ENCODE measurements at regions of chr9 and their contacts with region 1.

Region 1: DNA sequence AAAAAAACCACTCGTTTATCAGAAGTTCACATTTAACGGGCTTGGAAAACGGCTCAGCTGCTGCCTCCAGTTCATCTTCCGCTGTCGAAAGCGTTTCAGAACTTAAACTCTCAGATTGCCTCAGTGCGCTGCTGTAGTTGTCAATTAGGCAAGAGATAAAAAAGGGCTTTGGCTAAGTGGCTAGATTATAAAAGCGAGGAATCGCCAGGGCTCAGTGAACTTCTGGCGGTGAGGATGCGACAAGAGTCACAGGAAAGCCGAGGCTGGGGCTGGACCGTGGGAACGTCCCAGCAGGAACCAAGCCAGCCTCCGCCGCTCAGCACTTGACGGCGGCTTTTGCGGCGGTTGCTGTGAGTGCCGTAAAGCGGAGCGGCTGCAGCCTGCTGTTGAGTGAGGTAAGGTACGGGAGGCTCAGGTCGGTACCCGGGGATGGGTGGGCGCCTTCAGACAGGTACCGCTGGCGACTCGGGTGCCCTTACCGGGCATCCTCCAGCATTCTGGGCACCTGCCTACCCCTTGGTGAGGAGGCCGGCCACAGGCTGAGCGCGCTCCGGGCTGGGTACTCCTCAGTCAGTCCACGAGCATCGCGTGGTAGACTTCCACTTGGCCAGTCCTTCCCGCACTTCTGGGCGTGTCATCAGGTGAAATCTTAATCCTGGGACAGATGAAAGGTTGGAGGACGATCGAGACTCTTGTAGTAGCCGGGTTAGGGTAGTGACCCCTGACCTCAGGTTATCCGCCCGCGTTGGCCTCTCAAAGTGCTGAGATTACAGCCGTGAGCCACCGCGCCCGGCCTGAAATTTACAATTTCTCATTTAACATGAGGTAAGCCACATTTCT is at the start of gene FKTN:
- DNase-seq: peak; percentile 73
- ATAC-seq: peak; percentile 95
- H3K4me3 ChIP-seq: peak within 1 kb of the TSS; percentile 76 to 93 (median 90)
- H3K27ac ChIP-seq: peak within 1 kb of the TSS; percentile 35
- H3K4me1 ChIP-seq: peaks cover 12% of the 10 kb centered on the region
- H3K27me3 ChIP-seq: no peaks in the 10 kb centered on the region; a peak in 1 of 5 replicates
- CTCF ChIP-seq: no peak
- EP300 ChIP-seq: no peak
- POLR2A ChIP-seq: peak in 1 of 2 experiments; percentile 84; a peak in 2 of 4 replicates
- RAD21 ChIP-seq: peak; percentile 9; the same call in 1 of the 2 replicates
- total RNA-seq, gene FKTN: 13.5 and 15.2 TPM in 2 replicates

Region 2: DNA sequence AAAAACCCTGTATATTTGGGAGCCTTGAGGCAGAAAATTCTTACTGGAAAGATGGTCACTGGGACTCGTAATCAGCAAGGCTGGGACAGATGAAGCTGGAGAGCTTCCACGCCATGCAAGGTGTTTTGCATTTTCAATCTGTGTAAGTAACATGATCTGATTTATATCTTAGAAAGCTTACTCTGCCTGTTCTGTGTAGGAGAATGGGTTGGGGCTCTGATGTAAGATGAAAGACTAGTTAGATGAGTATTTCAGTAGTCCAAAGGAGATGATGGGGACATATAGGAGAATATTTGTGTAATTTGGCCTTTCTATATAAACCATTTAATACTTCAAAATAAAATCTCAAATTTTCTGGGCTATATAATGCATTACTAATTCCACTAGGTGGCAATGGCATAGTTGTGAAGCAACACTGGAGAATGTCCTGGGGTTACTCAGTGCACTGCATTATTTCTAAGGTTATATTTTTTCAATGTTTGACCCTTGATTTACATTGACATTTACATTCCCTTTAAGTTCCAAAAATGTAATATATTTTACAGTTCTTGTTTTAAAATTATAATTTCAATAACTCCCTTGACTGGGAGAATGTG is 132.1 kb before region 1 on chr9:
- CTCF ChIA-PET with region 1: no interaction called
- POLR2A ChIA-PET with region 1: no interaction called
- in situ Hi-C with region 1: no loop called
- intact Hi-C with region 1: loop called (anchors 5 kb)
- DNase-seq: no peak
- ATAC-seq: peak; percentile 86
- H3K4me3 ChIP-seq: no peak overlapping the region
- H3K27ac ChIP-seq: no peak overlapping the region
- H3K4me1 ChIP-seq: peaks cover 22% of the 10 kb centered on the region
- H3K27me3 ChIP-seq: no peaks in the 10 kb centered on the region
- CTCF ChIP-seq: peak; percentile 58
- EP300 ChIP-seq: no peak
- POLR2A ChIP-seq: no peak
- RAD21 ChIP-seq: peak; percentile 41; the same call in 1 of the 2 replicates

Measured in HepG2 (cell line).